Endothelial cell of umbilical vein (primary cell): ENCODE measurements at regions of chr16 and their contacts with region 1.

Region 1: GRCh38 chr16:24253192-24253591 is 2.9 kb upstream of the CACNG3 start:
- DNase-seq: peak; percentile 43
- H3K4me3 ChIP-seq: no peak overlapping the region
- H3K27ac ChIP-seq: no peak overlapping the region
- H3K4me1 ChIP-seq: no peaks in the 10 kb centered on the region
- H3K27me3 ChIP-seq: no peaks in the 10 kb centered on the region
- CTCF ChIP-seq: peak; percentile 52 to 75
- POLR2A ChIP-seq: no peak

Region 2: DNA sequence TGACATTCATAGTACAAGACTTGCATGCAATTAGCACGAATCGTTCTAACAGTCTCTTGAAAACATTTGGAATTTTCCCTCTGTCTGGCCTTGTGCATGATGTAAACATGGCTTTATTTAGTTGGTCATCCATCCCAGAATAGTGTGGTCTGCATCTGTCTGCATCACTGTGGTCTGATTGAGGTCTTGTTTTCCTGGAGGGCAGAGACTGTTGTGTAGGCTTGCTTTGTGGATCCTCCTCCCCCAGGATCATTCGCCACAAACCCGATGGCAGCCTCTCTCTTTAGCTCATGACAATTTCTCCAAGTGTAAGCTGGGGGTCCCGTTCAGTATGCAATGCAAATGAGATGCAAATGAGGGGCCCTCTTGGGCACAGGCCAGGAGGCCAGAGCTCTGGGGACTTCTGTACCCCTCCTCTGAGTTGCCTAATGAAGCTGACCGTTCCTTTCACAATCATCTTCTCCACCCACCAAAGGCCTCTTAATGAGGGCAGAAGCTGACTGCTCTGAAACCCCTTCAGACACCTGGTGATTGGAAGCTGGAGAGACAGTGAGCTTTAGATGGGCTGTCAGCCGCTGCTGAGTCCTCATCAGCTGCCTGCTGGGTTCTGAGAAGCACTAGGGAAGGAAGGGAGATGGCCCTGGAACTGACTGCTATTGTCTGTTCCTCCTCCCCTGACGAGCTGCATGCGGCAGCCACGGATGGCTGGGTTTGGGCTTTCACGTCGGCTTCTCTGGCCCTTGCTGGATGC is 198.3 kb before region 1 on chr16:
- CTCF ChIA-PET with region 1: interaction called, 12 read pairs
- POLR2A ChIA-PET with region 1: no interaction called
- dilution Hi-C with region 1: no loop called
- intact Hi-C with region 1: no loop called
- DNase-seq: no peak
- H3K4me3 ChIP-seq: no peak overlapping the region
- H3K27ac ChIP-seq: no peak overlapping the region
- H3K4me1 ChIP-seq: no peaks in the 10 kb centered on the region
- H3K27me3 ChIP-seq: peaks cover 0 to 1% of the 10 kb centered on the region in 2 experiments
- CTCF ChIP-seq: no peak
- POLR2A ChIP-seq: no peak

Region 3: GRCh38 chr16:24075931-24076716 is 177.1 kb before region 1 on chr16:
- CTCF ChIA-PET with region 1: interaction called, 512 read pairs
- POLR2A ChIA-PET with region 1: no interaction called
- dilution Hi-C with region 1: loop called (anchors 25 kb)
- intact Hi-C with region 1: loop called (anchors 1 kb)
- DNase-seq: no peak
- H3K4me3 ChIP-seq: no peak overlapping the region
- H3K27ac ChIP-seq: no peak overlapping the region
- H3K4me1 ChIP-seq: no peaks in the 10 kb centered on the region
- H3K27me3 ChIP-seq: no peaks in the 10 kb centered on the region
- CTCF ChIP-seq: no peak
- POLR2A ChIP-seq: no peak

Region 4: DNA sequence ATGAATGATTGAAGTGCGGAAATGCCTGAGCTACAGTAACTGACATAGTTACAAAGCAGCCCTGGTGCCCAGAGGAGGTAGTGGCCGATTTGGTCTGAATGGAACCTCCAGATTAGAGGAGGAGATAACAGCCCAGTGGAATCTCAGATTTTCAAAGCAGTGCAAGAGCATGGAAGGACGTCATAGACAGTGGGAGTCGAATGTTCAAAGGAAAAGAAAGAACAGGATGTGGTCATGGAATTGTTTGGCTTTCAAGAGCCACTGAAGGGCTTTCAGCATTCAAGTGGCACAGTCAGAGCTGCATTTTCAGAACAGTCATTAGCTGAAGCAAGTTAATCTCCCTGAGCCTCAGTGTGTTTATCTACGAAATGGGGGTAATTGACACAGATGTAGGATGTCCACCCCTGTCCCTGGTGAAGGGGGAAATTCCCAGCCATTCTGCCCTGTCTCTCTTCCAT is 101.7 kb before region 1 on chr16:
- CTCF ChIA-PET with region 1: interaction called, 14 read pairs
- POLR2A ChIA-PET with region 1: no interaction called
- dilution Hi-C with region 1: no loop called
- intact Hi-C with region 1: loop called (anchors 2 kb)
- DNase-seq: peak; percentile 88
- H3K4me3 ChIP-seq: peak overlapping the region in 1 of 3 experiments; percentile 30
- H3K27ac ChIP-seq: peak overlapping the region; percentile 97
- H3K4me1 ChIP-seq: peaks cover 36% of the 10 kb centered on the region
- H3K27me3 ChIP-seq: no peaks in the 10 kb centered on the region
- CTCF ChIP-seq: peak; percentile 10 to 17
- POLR2A ChIP-seq: no peak

Region 5: DNA sequence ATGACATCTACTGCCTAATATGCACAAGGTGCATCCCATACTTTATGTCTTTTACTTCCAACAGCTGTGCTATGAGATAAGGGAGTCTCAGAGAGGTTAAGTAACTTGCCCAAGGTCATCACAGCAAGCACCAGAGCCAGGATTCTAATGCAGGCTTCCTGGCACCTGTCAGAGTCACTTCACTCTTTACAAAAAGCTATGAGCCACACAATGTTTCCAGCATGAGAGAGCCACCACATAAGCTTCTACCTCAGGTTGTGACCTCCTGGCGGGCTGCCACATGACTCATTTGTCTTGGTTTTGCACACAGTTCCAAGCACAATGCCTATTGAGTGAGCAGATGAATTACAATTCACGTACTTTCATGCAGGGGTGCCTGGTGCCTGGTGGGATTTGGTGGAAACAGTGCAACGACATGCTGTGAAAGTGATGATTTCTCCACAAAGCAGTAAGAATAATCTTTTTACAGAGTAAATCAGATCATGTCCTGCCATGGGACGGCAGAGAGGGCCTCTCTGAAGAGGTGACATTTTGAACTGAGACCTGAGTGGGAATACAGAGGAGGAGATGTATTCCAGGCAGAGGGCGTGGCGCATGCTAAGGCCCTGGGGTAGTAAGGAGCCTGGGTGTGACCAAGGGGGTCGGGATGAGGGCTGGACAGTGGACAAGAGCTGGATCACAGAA is 56.2 kb after region 1 on chr16:
- CTCF ChIA-PET with region 1: no interaction called
- POLR2A ChIA-PET with region 1: no interaction called
- dilution Hi-C with region 1: no loop called
- intact Hi-C with region 1: no loop called
- DNase-seq: peak; percentile 78
- H3K4me3 ChIP-seq: no peak overlapping the region
- H3K27ac ChIP-seq: no peak overlapping the region
- H3K4me1 ChIP-seq: no peaks in the 10 kb centered on the region
- H3K27me3 ChIP-seq: no peaks in the 10 kb centered on the region
- CTCF ChIP-seq: no peak
- POLR2A ChIP-seq: no peak

Region 6: GRCh38 chr16:24504472-24505345 is 251.5 kb after region 1 on chr16:
- CTCF ChIA-PET with region 1: interaction called, 34 read pairs
- POLR2A ChIA-PET with region 1: no interaction called
- dilution Hi-C with region 1: no loop called
- intact Hi-C with region 1: loop called (anchors 1 kb)
- DNase-seq: peak; percentile 67
- H3K4me3 ChIP-seq: no peak overlapping the region
- H3K27ac ChIP-seq: no peak overlapping the region
- H3K4me1 ChIP-seq: no peaks in the 10 kb centered on the region
- H3K27me3 ChIP-seq: peaks cover 0 to 3% of the 10 kb centered on the region in 2 experiments
- CTCF ChIP-seq: peak; percentile 70 to 73
- POLR2A ChIP-seq: no peak

Region 7: DNA sequence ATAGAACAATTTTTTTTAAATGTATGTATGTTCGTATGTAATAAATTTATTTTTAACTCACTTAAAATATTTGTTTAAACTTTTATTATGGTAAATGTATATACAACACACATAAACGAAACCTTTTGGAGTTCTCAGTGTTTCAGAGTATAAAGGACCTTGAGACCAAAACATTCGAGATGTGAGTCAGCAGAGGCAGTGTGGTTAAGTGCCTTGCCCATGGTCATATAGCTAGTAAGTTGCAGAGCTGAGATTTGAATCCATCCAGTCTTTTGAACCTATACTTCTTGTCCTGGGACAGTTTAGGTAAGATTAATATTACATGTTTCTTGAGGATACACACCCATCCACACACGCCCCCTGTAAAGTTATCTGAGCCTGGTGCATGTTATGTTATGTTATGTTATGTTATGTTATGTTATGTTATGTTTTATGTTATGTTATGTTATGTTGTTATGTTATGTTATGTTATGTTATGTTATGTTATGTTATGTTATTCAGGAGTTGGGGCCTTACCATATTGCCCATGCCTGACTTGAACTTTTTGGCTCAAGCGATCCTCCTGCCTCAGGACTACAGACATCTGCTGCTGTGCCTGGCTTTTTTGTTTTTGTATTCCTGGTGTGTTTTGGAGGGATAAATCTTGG is 518.1 kb after region 1 on chr16:
- CTCF ChIA-PET with region 1: no interaction called
- POLR2A ChIA-PET with region 1: no interaction called
- dilution Hi-C with region 1: no loop called
- intact Hi-C with region 1: no loop called
- DNase-seq: no peak
- H3K4me3 ChIP-seq: no peak overlapping the region
- H3K27ac ChIP-seq: no peak overlapping the region
- H3K4me1 ChIP-seq: no peaks in the 10 kb centered on the region
- H3K27me3 ChIP-seq: no peaks in the 10 kb centered on the region
- CTCF ChIP-seq: no peak
- POLR2A ChIP-seq: no peak